ENCODE measurements at regions of chr1 and their contacts with region 1.

Region 1: DNA sequence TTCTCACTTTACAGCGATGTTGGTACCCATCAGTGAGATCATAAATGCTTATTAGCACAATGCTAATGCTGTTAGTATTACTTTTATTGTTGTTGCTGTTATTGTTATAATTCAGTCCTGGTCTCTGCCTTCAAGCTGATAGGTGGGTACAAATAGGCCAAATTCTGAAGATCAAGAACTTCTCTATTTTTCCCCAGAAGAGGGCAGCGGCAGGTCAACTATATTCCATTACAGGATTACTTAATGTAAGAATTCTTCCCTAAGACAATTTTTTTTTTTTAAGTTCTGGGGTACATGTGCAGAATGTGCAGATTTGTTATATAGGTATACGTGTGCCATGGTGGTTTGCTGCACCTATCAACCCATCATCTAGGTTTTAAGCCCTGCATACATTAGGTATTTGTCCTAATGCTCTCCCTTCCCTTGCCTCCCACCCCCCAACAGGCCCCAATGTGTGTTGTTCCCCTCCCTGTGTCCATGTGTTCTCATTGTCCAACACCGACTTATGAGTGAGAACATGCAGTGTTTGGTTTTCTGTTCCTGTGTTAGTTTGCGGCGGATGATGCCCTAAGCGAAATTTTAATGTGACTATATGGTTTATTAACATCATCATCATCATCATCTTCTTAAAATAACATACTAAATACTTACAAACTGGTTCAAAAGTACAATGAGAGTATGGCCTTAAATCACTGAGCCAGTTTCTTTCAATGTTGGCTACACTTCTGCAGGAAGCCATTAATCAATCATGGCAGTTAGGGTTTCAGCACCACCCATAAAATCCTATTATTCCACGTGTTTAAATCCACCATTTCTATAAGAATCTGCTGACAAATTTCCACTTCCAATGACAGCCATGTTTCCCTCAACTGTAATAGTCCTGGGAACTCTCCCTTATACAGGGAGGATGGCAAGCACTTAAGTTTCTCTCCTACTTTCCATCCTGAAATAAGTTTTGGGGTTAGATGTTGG is 19.2 kb downstream of the SLC19A2 start:
- DNase-seq: peak in 1 of 2 donors; percentile 43
- H3K4me3 ChIP-seq: no peak overlapping the region
- H3K27ac ChIP-seq: no peak overlapping the region
- H3K4me1 ChIP-seq: no peaks in the 10 kb centered on the region
- H3K27me3 ChIP-seq: no peaks in the 10 kb centered on the region
- CTCF ChIP-seq: peak; percentile 28 to 44 (median 36)
- POLR2A ChIP-seq: no peak

Region 2: DNA sequence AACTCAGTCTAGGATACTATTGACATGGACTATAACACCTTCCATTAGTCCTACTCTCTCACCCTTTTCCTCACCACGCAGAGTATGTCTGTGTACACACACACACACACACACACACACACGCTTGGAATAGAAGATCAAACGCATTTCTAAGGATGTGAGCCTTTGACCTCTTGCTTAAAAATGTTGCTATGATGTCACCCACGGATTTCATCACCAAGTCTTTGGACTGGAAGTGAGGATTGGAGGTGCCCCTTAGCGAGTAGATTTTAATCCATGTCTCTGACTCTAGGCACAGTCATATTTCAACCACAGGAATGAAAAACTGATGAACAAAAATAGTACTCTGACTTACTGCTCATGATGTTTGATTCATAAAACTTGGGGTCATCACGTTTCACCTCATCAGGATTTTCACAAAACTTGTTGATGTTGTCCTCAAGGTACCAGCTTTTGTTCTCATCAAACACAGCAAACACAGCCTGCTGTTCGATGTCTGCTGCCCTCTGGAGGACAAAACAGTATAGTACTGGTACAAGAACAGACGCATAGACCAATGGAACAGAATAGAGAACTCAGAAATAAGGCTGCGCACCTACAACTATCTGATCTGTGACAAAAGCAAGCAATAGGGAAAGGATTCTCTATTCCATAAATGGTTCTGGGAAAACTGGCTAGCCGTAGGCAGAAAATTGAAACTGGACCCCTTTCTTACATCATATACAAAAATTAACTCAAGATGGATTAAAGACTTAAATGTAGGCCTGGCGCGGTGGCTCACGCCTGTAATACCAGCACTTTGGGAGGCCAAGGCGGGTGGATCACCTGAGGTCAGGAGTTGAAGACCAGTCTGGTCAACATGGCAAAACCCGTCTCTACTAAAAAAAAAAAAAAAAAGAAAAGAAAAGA is 79.8 kb after region 1 on chr1:
- intact Hi-C with region 1: loop called (anchors 5 kb)
- DNase-seq: peak; percentile 33 to 65
- H3K4me3 ChIP-seq: no peak overlapping the region
- H3K27ac ChIP-seq: no peak overlapping the region
- H3K4me1 ChIP-seq: no peaks in the 10 kb centered on the region
- H3K27me3 ChIP-seq: no peaks in the 10 kb centered on the region
- CTCF ChIP-seq: peak; percentile 74 to 87 (median 80)
- POLR2A ChIP-seq: no peak